AG04450 (cell line): ENCODE measurements at regions of chr11 and their contacts with region 1.

Region 1: DNA sequence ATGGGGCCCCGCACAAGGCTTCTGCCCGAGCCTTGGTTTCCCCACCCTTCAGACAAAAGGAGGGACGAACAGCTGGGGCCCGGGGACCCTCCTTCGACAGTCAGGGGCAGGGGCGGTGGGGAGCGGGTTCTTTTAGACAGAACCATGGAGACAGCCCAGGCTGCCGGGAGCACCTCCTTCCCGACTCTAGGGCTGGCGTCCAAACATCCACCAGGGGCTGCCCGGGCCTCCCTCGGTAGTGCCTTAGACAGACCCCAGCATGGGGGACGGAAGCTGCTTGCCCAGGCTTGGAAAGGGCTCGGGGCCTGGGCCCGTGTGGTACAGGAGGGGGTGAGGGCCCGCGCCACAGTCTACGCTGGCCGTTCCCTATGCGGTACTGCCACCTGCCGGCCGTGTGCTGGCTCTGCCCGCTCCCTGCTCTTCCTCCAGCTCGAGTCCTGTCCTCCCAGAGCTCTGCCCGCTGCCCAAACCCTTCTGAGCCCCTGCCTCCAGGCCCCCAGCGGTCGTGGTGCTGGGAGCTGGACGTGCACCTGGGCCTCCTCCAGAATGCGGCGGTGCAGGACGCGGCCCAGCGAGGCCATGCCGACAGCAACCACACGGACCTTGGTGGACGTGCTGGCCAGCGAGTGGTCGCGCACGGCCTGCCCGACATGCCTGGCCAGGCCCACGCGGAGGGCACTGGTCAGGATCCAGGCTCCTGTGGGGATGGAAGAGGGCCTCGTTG is 20.1 kb downstream of the TSSC4 start:
- DNase-seq: peak; percentile 27
- H3K4me3 ChIP-seq: no peak overlapping the region
- H3K27ac ChIP-seq: no peak overlapping the region
- H3K27me3 ChIP-seq: peaks cover 8% of the 10 kb centered on the region
- CTCF ChIP-seq: peak; percentile 92

Region 2: GRCh38 chr11:2186669-2187279 is 233.9 kb before region 1 on chr11:
- CTCF ChIA-PET with region 1: interaction called, 27 read pairs
- POLR2A ChIA-PET with region 1: no interaction called
- DNase-seq: no peak
- H3K4me3 ChIP-seq: no peak overlapping the region
- H3K27ac ChIP-seq: no peak overlapping the region
- H3K27me3 ChIP-seq: peaks cover 21% of the 10 kb centered on the region
- CTCF ChIP-seq: peak; percentile 31

Region 3: GRCh38 chr11:2305140-2305840 is 115.4 kb before region 1 on chr11:
- CTCF ChIA-PET with region 1: interaction called, 116 read pairs
- POLR2A ChIA-PET with region 1: interaction called, 5 read pairs
- DNase-seq: no peak
- H3K4me3 ChIP-seq: peak overlapping the region; percentile 27; the same call in 1 of the 2 replicates
- H3K27ac ChIP-seq: peak overlapping the region; percentile 95
- H3K27me3 ChIP-seq: no peaks in the 10 kb centered on the region
- CTCF ChIP-seq: peak; percentile 71

Region 4: GRCh38 chr11:2400069-2400760 is 20.4 kb before region 1 on chr11 and contains the start of gene TSSC4:
- CTCF ChIA-PET with region 1: interaction called, 29 read pairs
- POLR2A ChIA-PET with region 1: no interaction called
- DNase-seq: peak; percentile 100
- H3K4me3 ChIP-seq: peak within 1 kb of the TSS; percentile 91
- H3K27ac ChIP-seq: peak within 1 kb of the TSS; percentile 98
- H3K27me3 ChIP-seq: no peaks in the 10 kb centered on the region
- CTCF ChIP-seq: peak; percentile 97
- polyA plus RNA-seq, gene TSSC4: 13.3 and 19.2 TPM in 2 replicates

Region 5: DNA sequence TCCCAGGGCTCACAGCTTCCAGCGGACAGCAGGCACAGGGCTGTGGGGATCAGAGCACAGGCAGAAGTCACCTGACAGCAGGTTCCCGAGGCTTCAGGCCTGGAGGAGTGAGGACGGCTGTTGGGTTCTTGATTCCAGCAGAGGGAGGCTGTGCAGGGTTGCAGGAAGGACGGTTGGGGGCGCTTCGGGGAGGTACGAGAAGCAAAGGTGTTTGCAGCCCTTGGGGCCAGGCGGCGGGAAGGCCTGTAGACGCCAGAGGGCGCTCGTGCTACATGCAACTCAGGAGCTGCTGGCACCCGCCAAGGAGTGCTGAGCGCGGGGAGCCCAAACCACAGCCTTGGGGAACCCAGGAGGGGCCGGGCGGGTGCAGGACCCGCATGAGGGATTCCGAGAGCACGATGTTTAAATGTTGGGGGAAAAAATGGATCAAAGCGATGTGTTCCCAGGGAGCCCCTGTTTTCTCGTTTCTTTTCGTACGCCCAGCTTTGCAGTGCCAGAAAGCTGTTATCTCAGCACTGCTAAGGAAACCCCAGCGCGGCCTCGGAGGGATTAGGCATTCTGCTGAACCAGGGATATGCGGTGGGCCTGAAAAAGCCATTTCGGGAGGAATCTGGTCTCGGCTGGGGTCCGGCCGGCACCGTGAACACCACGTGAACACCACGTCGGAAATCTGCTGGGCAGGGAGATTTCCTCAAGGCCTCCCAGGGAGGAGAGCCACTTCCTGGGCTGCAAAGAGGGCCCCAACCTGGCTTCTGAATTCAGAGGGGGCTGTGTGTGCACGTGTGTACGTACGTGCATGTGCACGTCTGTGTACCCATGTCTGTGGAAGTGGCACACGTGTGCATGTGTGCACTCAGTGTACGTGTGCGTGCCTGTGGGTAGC is 112.3 kb after region 1 on chr11:
- CTCF ChIA-PET with region 1: interaction called, 38 read pairs
- POLR2A ChIA-PET with region 1: no interaction called
- DNase-seq: peak; percentile 84
- H3K4me3 ChIP-seq: no peak overlapping the region
- H3K27ac ChIP-seq: peak overlapping the region; percentile 97
- H3K27me3 ChIP-seq: peaks cover 4% of the 10 kb centered on the region
- CTCF ChIP-seq: peak; percentile 99